SK-N-SH (cell line): ENCODE measurements at regions of chr2 and their contacts with region 1.

Region 1: GRCh38 chr2:117470311-117471095 is 344.0 kb upstream of the DDX18 start:
- DNase-seq: peak; percentile 43
- H3K4me3 ChIP-seq: no peak overlapping the region; a peak in 1 of 4 replicates
- H3K27ac ChIP-seq: peak overlapping the region in 1 of 2 experiments; percentile 82; a peak in 2 of 4 replicates
- H3K4me1 ChIP-seq: peaks cover 0 to 3% of the 10 kb centered on the region in 2 experiments; a peak in 1 of 4 replicates
- H3K27me3 ChIP-seq: no peaks in the 10 kb centered on the region
- CTCF ChIP-seq: peak; percentile 40
- EP300 ChIP-seq: peak in 1 of 2 experiments; percentile 77; a peak in 2 of 4 replicates
- RAD21 ChIP-seq: peak; percentile 89

Region 2: DNA sequence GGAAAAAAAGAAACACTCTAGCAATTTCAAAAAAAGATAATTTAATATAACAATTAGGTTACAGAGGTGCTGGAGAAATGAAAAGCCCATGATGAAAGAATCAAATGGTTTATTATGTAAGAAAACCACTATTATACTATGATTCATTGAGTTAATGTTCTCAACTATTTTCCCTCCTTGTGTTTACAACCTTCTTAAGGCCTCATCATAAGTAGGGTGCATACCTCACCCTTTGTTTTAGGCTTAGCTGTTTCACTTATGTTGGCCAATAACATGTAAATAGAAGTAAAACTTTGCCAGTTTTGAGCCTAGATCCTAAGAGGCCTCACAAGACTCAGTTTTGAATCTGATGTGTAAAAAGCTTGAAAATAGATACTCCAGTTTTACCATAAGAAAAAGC is 74.3 kb before region 1 on chr2:
- CTCF ChIA-PET with region 1: no interaction called
- POLR2A ChIA-PET with region 1: no interaction called
- DNase-seq: no peak
- H3K4me3 ChIP-seq: no peak overlapping the region
- H3K27ac ChIP-seq: no peak overlapping the region
- H3K4me1 ChIP-seq: no peaks in the 10 kb centered on the region
- H3K27me3 ChIP-seq: no peaks in the 10 kb centered on the region
- CTCF ChIP-seq: no peak
- EP300 ChIP-seq: no peak
- RAD21 ChIP-seq: no peak

Region 3: DNA sequence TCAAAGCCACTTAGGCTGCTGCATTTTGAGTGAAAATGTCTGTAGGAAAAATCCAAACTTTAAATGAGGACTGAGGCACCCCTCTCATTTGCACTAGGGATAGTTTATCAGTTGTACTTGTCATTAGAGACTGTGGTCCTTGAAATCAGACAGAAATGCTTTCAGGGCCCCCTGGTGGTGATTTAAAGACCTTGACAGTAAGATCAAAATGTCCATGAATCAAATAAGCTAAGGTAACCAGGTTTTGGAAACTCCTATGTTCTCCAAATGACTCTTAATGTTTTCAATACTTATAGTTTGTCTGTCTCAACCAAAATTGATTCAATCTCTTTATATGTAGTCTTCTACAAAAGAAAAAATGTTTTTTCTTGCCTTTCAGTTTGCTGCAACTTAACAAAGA is 315.2 kb after region 1 on chr2:
- CTCF ChIA-PET with region 1: interaction called, 12 read pairs
- POLR2A ChIA-PET with region 1: no interaction called
- DNase-seq: peak; percentile 57
- H3K4me3 ChIP-seq: no peak overlapping the region; a peak in 1 of 4 replicates
- H3K27ac ChIP-seq: no peak overlapping the region
- H3K4me1 ChIP-seq: no peaks in the 10 kb centered on the region
- H3K27me3 ChIP-seq: no peaks in the 10 kb centered on the region
- CTCF ChIP-seq: peak; percentile 74
- EP300 ChIP-seq: no peak
- RAD21 ChIP-seq: peak; percentile 82